Endothelial cell of umbilical vein (primary cell): ENCODE measurements at regions of chr1 and their contacts with region 1.

Region 1: DNA sequence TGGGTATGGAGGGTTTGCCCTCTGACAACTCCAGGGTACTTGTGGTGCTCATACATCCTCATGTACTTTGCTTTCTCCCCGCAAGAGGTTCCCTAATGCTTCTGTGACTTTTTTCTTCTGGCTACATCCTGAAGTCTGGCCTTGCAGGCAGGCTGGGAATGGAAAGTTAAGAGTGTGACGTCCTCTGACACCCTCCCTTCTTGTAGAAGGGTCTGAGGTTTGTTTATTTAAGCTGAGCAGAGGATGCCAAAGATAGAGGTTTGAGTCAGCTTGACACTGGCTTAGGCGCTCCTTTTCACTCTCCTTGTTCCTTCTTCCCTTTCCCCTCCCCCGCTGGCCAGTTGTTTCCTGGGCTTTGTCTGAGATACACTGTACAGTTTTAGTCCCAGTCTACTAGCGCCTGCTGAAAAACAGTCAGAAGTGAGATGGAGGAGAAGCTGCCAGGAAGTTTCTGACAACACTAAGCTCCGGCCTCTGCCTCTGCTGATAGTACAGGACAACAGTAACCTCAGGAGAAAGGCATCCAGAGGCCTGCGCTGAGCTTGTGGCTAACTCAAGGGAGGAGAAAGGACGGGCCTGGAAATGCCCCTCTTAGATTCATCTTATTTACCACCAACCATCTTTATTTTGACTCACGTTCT is at the start of gene MACF1:
- DNase-seq: peak; percentile 93
- H3K4me3 ChIP-seq: peak within 1 kb of the TSS; percentile 2 to 66 (median 7)
- H3K27ac ChIP-seq: peak within 1 kb of the TSS; percentile 86
- H3K4me1 ChIP-seq: peaks cover 37% of the 10 kb centered on the region
- H3K27me3 ChIP-seq: no peaks in the 10 kb centered on the region
- CTCF ChIP-seq: peak; percentile 39 to 55
- POLR2A ChIP-seq: no peak
- total RNA-seq, gene MACF1: 566 and 587 TPM in 2 replicates

Region 2: GRCh38 chr1:38344716-38345115 is 859.8 kb before region 1 on chr1:
- CTCF ChIA-PET with region 1: no interaction called
- POLR2A ChIA-PET with region 1: no interaction called
- dilution Hi-C with region 1: no loop called
- intact Hi-C with region 1: no loop called
- DNase-seq: no peak
- H3K4me3 ChIP-seq: no peak overlapping the region
- H3K27ac ChIP-seq: no peak overlapping the region
- H3K4me1 ChIP-seq: no peaks in the 10 kb centered on the region
- H3K27me3 ChIP-seq: no peaks in the 10 kb centered on the region
- CTCF ChIP-seq: no peak
- POLR2A ChIP-seq: no peak

Region 3: DNA sequence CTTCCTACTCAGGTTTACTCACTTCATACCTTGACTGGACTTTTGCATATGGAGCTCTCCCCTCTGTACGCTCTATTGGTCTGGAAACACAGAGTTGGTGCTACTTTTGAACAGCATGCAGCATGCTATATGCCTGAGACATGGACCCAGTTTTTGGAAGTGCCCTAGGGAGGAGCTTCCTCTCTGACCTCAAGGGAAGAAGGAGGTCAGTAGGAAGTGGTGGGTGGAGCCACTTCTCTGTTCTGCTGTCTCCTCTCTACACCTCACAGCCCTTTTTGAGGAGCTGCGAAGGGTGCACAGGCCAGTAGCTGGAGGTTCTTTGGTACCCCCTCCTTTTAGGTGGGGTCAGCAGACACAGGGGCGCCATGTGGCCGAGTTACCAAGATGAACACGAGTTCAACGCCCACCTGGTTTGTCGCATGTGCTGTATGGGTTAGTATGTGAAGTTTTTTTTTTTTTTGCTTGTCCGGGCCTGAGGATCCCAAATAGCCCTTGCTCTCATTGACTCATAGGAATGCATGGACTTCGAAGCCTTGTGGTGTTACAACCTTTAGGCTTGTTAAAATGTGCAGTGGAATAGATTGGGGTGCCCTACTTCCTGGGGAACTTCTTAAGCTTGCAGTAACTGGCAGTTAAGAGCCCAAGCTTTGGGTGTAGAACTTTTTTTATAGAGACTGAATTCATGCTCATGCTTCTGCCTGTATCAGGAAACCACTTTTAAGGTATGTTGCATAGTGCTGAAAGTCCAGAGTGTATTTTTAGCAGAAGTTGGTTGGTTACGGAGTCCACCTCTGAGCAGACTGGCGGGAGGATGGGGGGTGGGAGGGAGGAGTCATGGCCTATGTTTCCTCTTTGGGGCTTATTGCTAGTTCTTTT is 10.7 kb after region 1 on chr1:
- CTCF ChIA-PET with region 1: interaction called, 20 read pairs
- POLR2A ChIA-PET with region 1: no interaction called
- dilution Hi-C with region 1: no loop called
- intact Hi-C with region 1: no loop called
- DNase-seq: no peak
- H3K4me3 ChIP-seq: no peak overlapping the region
- H3K27ac ChIP-seq: no peak overlapping the region
- H3K4me1 ChIP-seq: peaks cover 34% of the 10 kb centered on the region
- H3K27me3 ChIP-seq: no peaks in the 10 kb centered on the region
- CTCF ChIP-seq: no peak
- POLR2A ChIP-seq: no peak

Region 4: DNA sequence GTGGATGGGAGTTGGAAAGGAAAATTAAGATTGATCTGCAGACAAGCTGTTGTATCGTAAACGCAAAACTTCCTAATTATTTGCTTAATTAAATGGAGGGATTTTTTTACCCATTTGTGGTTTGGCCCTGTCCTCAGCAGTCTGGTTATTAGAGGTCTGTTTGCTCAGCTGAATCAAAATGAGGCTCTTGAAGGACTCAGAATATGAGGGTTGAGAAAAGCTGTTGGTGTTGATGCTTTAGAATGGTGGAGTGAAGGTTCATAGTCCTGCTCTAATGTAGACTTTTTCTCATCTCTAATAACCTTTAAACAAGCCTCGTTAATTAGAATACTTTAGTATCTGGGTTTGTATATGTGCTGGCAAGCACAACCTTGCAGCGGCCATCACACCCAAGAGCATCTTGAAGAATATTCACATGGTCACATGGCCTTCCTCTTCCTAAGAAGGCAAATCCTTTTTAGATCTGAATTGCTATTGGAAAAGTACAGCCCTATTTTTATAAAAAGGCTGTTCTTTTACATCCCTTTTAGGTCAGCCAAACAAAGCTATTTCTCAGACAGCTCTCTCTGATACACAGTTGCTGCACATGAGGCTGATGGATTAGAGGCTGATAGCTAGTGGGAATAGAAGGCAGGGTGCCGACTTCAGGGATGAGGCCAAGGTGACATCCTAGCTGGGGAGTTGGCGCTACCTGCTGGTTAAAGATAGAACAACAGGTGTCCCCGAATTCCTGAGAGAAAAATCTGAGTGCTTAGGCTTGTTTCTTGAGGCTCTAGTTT is 53.8 kb after region 1 on chr1:
- CTCF ChIA-PET with region 1: interaction called, 19 read pairs
- POLR2A ChIA-PET with region 1: no interaction called
- dilution Hi-C with region 1: no loop called
- intact Hi-C with region 1: loop called (anchors 1 kb)
- DNase-seq: peak; percentile 75
- H3K4me3 ChIP-seq: no peak overlapping the region
- H3K27ac ChIP-seq: no peak overlapping the region
- H3K4me1 ChIP-seq: no peaks in the 10 kb centered on the region
- H3K27me3 ChIP-seq: no peaks in the 10 kb centered on the region
- CTCF ChIP-seq: peak; percentile 70 to 71
- POLR2A ChIP-seq: no peak